Activated naive CD4-positive, alpha-beta T cell treated with anti-CD3 and anti-CD28 coated beads for 36 hours (primary cell): ENCODE measurements at regions of chr10 and their contacts with region 1.

Region 1: GRCh38 chr10:69716711-69717560 is 84.8 kb upstream of the COL13A1 start:
- DNase-seq: peak; percentile 78
- H3K4me3 Mint-ChIP-seq: no peak overlapping the region
- H3K27ac Mint-ChIP-seq: no peak overlapping the region
- H3K4me1 Mint-ChIP-seq: no peaks in the 10 kb centered on the region
- H3K27me3 Mint-ChIP-seq: no peaks in the 10 kb centered on the region

Region 2: GRCh38 chr10:69644658-69645295 is 72.2 kb before region 1 on chr10:
- CTCF ChIA-PET with region 1: interaction called, 20 read pairs
- intact Hi-C with region 1: loop called (anchors 1 kb)
- DNase-seq: peak; percentile 63
- H3K4me3 Mint-ChIP-seq: no peak overlapping the region
- H3K27ac Mint-ChIP-seq: no peak overlapping the region
- H3K4me1 Mint-ChIP-seq: no peaks in the 10 kb centered on the region
- H3K27me3 Mint-ChIP-seq: peaks cover 1% of the 10 kb centered on the region

Region 3: DNA sequence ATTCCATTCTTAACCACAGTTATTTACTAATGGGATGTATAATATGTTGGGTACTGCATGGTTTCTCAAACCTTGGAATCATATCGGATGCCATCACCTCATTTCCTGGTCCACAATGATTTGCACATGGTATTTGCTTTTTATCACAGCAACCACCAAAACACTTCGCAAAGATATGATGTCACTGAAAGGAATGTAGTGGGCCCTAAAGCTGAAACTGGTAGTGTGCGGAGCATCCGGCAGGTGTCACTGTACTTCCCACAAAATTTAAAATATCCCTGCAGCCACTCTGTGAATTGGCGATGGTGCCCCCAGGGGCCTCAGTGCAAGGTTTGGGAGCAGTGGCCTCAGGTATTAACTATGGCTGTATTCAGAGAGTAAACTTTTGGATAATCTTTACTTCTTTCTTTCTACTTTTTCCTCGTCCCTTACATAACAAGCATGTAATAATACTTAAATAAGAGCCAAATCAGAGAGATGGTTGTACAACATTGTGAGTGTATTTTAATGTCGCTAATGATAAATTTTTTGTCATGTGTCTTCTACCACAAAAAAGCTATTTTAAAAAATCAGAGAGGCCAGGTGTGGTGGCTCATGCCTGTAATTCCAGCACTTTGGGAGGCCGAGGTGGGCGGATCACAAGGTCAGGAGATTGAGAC is 20.7 kb before region 1 on chr10:
- CTCF ChIA-PET with region 1: interaction called, 14 read pairs
- intact Hi-C with region 1: no loop called
- DNase-seq: peak; percentile 39
- H3K4me3 Mint-ChIP-seq: no peak overlapping the region
- H3K27ac Mint-ChIP-seq: no peak overlapping the region
- H3K4me1 Mint-ChIP-seq: no peaks in the 10 kb centered on the region
- H3K27me3 Mint-ChIP-seq: peaks cover 13% of the 10 kb centered on the region